ENCODE measurements at regions of chr12 and their contacts with region 1.

Region 1: DNA sequence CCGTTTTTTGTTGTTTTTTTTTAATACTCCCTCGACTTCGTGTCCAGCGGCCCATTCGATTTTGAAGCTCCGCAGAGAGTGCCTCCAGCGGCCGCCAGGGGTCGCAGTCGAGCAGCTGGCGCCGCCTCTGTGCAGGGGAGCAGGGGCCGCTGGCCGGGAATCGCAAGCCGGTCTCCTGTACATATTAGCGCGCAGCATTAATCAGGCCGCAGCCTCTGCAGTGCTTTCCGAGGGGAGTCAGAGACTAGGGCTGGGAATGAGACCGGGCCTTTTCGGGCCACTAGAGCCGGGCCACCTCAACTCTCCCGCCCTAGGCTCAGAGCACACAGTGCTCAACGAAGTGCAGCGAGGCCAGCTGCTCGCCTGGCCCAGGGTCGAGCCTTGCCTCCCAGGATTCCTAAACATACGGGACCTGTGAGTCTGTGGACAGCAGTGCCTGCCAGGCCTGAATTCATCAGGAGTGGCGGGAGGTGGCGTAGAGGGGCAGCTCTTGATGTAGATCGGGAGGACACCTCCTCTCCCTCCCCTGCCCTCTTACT is 81.8 kb downstream of the EMP1 start:
- DNase-seq: peak; percentile 85
- H3K4me3 ChIP-seq: no peak overlapping the region
- H3K27ac ChIP-seq: no peak overlapping the region
- H3K4me1 ChIP-seq: peaks cover 0 to 9% (median 3%) of the 10 kb centered on the region in 4 donors
- H3K27me3 ChIP-seq: peaks cover 0 to 8% (median 0%) of the 10 kb centered on the region in 3 donors
- CTCF ChIP-seq: peak; percentile 70 to 98 (median 80)
- EP300 ChIP-seq: no peak
- POLR2A ChIP-seq: no peak

Region 2: DNA sequence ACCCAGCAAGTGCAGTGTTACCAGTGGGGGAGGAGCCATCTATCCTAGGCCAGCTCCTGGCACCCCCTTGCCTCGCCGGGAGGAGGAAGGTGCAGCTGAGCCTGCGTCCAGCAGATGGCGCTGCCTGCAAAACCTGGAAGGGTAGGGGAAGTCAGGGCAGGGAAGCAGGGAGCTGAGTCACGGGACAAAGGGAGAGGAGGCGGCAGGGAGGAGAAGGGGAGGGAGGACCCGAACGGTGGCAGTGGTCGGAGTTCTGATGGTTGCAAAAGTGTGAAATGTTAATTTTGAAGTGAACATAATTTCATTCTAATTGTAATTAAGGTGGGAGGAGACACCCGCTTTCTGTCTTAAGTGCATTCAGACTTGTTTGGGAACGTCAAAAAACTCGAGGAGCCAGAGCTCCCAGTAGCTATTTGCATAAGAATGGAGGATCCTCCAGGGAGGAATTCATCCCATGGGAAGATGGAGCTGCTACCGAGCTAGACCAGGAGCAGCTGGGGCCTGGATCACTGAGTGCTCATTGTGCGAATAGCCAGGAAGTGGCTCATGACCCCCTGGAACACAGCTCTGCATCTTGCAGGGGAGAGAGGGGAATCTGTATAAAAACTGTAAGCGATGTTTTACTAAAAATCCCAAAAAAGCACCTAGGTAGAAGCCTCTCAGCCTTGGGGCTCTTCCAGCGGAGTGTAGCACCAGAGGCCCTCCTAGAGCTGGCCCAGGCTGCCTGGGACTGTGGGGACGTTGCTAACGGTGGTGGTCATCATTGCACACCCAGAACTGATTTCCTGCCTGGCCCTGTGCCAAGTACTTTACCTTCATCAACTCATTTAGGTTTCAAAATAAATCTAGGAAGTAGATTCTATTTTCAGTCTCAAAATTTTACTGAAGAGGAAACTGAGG is 22.3 kb before region 1 on chr12:
- intact Hi-C with region 1: no loop called
- DNase-seq: peak; percentile 97
- H3K4me3 ChIP-seq: peak overlapping the region in 3 of 4 donors; percentile 26 to 43 (median 43)
- H3K27ac ChIP-seq: peak overlapping the region in 1 of 4 donors; percentile 5
- H3K4me1 ChIP-seq: peaks cover 0 to 5% (median 2%) of the 10 kb centered on the region in 4 donors
- H3K27me3 ChIP-seq: no peaks in the 10 kb centered on the region
- CTCF ChIP-seq: peak; percentile 90 to 95 (median 93)
- EP300 ChIP-seq: no peak
- POLR2A ChIP-seq: no peak

Region 3: GRCh38 chr12:13307143-13307816 is 29.0 kb after region 1 on chr12:
- intact Hi-C with region 1: no loop called
- DNase-seq: no peak
- H3K4me3 ChIP-seq: no peak overlapping the region
- H3K27ac ChIP-seq: no peak overlapping the region
- H3K4me1 ChIP-seq: no peaks in the 10 kb centered on the region
- H3K27me3 ChIP-seq: no peaks in the 10 kb centered on the region
- CTCF ChIP-seq: no peak
- EP300 ChIP-seq: no peak
- POLR2A ChIP-seq: no peak

Region 4: DNA sequence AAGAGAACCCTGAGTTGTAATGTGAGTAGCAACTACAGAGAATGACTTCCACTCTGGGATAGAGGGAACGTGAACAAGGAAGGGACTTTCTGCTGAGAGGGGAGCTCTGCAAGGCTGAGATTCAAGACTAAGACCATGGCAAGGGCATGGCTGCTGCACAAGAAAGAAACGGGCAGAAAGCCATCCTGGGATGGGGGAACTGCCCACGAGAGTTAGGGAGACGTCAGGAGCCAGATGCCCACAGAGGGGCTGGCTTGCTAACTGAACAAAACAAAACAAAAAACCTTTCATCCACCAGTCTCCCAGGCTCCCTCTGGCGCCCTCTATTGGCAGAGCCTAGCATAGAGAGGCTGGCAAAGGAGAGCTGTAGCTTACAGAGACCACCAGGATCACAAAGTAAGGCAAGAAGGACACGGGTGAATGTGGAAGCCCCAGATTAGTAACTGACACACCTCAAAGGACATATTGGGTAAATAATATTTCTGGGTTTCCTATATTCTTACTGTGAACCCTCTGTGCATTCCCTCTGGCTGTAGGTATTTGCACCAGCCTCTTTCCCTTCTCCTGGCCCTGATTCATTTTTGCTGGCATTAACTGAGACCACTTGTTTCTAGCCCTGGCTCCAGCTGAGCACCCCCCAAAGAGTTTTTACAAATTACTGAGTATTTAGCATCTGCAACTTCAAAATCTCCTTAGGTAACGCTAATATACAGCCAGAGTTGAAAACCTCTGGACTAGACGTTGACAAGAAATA is 256.5 kb after region 1 on chr12:
- intact Hi-C with region 1: loop called (anchors 5 kb)
- DNase-seq: peak; percentile 72
- H3K4me3 ChIP-seq: no peak overlapping the region
- H3K27ac ChIP-seq: no peak overlapping the region
- H3K4me1 ChIP-seq: peaks cover 0 to 6% (median 2%) of the 10 kb centered on the region in 4 donors
- H3K27me3 ChIP-seq: no peaks in the 10 kb centered on the region
- CTCF ChIP-seq: peak; percentile 44 to 72 (median 64)
- EP300 ChIP-seq: no peak
- POLR2A ChIP-seq: no peak

Region 5: DNA sequence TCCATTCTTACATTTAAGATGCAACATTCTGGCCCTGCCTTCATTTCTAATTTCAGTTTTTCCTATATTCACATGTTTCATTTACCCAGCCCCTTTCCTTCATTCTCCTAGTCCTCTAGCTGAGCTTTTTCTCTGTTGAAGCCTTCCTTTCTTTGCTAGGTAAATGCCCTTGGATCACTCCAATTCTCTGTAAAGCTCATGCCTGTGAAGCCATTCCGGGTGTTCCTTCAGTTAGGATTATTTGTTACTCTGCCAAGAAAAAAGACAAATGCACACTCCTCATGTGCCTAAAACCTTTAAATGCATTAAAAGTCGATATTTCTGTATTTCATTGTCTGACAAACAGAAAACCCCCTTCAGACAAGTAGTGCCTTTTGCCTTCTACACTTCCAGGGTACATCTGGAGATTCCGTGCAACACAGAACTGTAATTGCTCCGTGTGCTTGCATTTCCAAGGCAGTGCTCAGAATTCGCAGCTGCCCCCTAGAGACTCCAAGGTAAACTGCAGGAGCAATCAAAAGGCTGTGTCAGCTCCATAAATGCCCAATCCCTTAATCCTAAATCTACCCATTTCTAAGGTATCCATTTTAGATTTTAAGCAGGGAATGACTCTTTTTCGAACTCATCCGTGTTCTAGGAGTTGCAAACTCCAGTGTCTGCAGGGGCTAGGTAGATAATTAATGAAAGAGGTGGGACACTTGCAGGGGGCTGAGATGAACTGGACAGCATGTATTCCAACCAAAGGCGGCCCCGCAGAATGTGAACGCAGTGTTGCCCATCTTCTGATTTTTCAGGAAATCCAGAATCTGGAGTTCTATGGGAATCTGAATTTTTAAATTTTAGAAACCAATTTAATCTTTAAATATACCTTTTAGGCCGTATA is 382.9 kb after region 1 on chr12:
- intact Hi-C with region 1: loop called (anchors 2 kb)
- DNase-seq: peak; percentile 67
- H3K4me3 ChIP-seq: no peak overlapping the region
- H3K27ac ChIP-seq: no peak overlapping the region
- H3K4me1 ChIP-seq: peaks cover 0 to 3% (median 0%) of the 10 kb centered on the region in 4 donors
- H3K27me3 ChIP-seq: no peaks in the 10 kb centered on the region
- CTCF ChIP-seq: peak; percentile 53 to 86 (median 72)
- EP300 ChIP-seq: no peak
- POLR2A ChIP-seq: no peak

Region 6: DNA sequence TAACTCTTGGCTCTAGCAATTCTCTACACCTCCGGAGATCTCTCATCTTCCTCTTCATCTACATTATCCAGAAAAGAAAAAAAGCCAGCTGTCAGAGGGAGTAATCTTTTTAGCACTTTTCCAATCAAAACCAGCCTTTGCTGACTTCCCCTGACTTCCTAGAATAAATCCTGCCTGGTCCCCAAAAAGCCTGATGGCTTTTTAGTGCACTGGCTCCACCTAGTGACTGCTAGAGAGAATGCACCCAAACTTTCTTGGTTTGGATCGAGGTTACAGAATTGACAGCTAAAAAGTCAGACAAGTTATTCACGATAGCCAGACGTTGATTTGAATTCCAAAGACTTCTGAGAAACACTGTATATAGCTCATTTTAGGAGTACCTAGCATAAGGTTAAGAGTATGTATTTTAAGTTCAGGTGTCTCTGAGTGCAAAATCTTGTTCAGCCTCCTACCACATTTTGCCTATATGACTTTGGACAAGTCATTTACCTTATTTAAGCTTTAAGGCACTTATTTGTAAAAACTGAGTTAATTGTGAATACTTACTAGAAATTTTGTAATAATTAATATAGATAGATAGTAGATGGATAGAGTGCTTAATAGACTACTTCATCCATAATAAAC is 888.8 kb after region 1 on chr12:
- intact Hi-C with region 1: loop called (anchors 2 kb)
- DNase-seq: no peak
- H3K4me3 ChIP-seq: no peak overlapping the region
- H3K27ac ChIP-seq: no peak overlapping the region
- H3K4me1 ChIP-seq: no peaks in the 10 kb centered on the region
- H3K27me3 ChIP-seq: no peaks in the 10 kb centered on the region
- CTCF ChIP-seq: peak; percentile 65 to 93 (median 82)
- EP300 ChIP-seq: no peak
- POLR2A ChIP-seq: no peak

Measured in sigmoid colon (tissue), 7 donors.